Endothelial cell of umbilical vein (primary cell): ENCODE measurements at regions of chr16 and their contacts with region 1.

Region 1: GRCh38 chr16:72501739-72502593 is 330.0 kb upstream of the PMFBP1 start:
- DNase-seq: peak; percentile 88
- H3K4me3 ChIP-seq: no peak overlapping the region
- H3K27ac ChIP-seq: no peak overlapping the region
- H3K4me1 ChIP-seq: no peaks in the 10 kb centered on the region
- H3K27me3 ChIP-seq: no peaks in the 10 kb centered on the region
- CTCF ChIP-seq: peak; percentile 68 to 75
- POLR2A ChIP-seq: no peak

Region 2: DNA sequence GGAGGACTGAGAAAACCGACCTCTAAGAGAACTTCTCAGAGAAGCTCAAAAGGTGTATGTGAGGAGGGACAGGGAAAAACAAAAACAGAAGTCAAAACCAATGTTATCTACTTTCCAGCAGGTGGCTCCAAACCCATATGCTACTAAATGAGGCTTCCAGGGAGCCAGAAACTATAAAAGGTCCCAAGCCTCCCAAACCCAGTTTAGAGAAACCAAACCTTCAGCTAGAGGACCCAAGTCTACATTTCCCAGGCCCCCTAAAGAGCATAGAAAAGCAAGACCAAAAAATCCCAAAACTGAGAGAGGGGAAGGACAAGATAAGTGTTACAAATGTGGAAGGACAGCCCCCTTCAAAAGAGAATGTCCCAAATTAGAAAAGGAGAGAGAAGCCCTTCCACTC is 435.2 kb before region 1 on chr16:
- CTCF ChIA-PET with region 1: no interaction called
- POLR2A ChIA-PET with region 1: no interaction called
- dilution Hi-C with region 1: no loop called
- intact Hi-C with region 1: no loop called
- DNase-seq: peak; percentile 39
- H3K4me3 ChIP-seq: no peak overlapping the region
- H3K27ac ChIP-seq: no peak overlapping the region
- H3K4me1 ChIP-seq: no peaks in the 10 kb centered on the region
- H3K27me3 ChIP-seq: peaks cover 0 to 1% of the 10 kb centered on the region in 2 experiments
- CTCF ChIP-seq: peak; percentile 36 to 52
- POLR2A ChIP-seq: no peak

Region 3: GRCh38 chr16:72482695-72483094 is 19.3 kb before region 1 on chr16:
- CTCF ChIA-PET with region 1: no interaction called
- POLR2A ChIA-PET with region 1: no interaction called
- dilution Hi-C with region 1: no loop called
- intact Hi-C with region 1: no loop called
- DNase-seq: no peak
- H3K4me3 ChIP-seq: no peak overlapping the region
- H3K27ac ChIP-seq: no peak overlapping the region
- H3K4me1 ChIP-seq: peaks cover 27% of the 10 kb centered on the region
- H3K27me3 ChIP-seq: no peaks in the 10 kb centered on the region
- CTCF ChIP-seq: no peak
- POLR2A ChIP-seq: no peak

Region 4: GRCh38 chr16:72523087-72523486 is 21.1 kb after region 1 on chr16:
- CTCF ChIA-PET with region 1: no interaction called
- POLR2A ChIA-PET with region 1: no interaction called
- dilution Hi-C with region 1: no loop called
- intact Hi-C with region 1: no loop called
- DNase-seq: no peak
- H3K4me3 ChIP-seq: no peak overlapping the region
- H3K27ac ChIP-seq: no peak overlapping the region
- H3K4me1 ChIP-seq: no peaks in the 10 kb centered on the region
- H3K27me3 ChIP-seq: no peaks in the 10 kb centered on the region
- CTCF ChIP-seq: no peak
- POLR2A ChIP-seq: no peak

Region 5: GRCh38 chr16:72664509-72665225 is 162.7 kb after region 1 on chr16:
- CTCF ChIA-PET with region 1: interaction called, 4 read pairs
- POLR2A ChIA-PET with region 1: no interaction called
- dilution Hi-C with region 1: no loop called
- intact Hi-C with region 1: loop called (anchors 10 kb)
- DNase-seq: peak; percentile 98
- H3K4me3 ChIP-seq: peak overlapping the region; percentile 89 to 96 (median 95)
- H3K27ac ChIP-seq: peak overlapping the region; percentile 88
- H3K4me1 ChIP-seq: peaks cover 10% of the 10 kb centered on the region
- H3K27me3 ChIP-seq: no peaks in the 10 kb centered on the region
- CTCF ChIP-seq: no peak
- POLR2A ChIP-seq: peak; percentile 59

Region 6: DNA sequence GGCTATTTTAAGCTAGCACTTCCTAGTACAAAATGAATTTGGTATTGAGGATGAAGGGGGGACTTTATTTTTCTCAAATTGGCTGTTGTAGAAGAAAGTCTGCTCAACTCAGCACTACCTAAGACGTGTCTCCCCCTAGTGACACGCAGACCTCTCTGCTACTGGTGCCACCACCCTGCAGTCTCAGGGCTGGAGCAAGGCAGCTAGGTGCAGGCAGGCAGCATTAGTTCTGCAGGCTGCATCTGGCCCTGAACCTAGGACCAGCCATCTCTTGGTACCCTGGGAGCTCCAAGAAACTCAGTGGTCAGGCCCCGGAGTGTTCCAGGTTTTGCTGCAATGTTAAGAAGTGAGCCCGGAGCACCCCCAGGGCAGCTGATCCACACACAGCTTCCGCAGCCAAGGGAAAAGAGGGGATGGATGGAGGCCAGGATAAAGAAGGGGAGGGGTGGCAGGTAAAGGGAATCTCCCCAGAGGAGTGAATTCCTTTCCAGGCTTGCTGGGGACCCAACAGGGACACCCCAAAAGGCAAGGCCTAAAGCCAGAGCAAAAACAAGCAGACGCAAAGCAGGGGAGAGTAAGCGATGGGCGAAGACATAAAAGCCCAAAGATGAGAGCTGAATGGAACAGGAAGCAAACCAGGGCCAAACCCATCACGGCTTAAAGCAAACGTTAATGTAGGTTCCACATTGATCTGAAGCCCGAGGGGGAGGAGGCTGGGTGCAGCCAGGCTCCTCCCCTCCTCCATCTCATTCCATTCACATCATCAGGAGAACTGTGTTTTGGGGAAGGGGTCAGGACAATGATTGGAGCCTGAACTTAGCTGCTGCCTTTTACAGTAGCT is 345.4 kb after region 1 on chr16:
- CTCF ChIA-PET with region 1: no interaction called
- POLR2A ChIA-PET with region 1: no interaction called
- dilution Hi-C with region 1: no loop called
- intact Hi-C with region 1: loop called (anchors 1 kb)
- DNase-seq: peak; percentile 32
- H3K4me3 ChIP-seq: no peak overlapping the region
- H3K27ac ChIP-seq: peak overlapping the region; percentile 90
- H3K4me1 ChIP-seq: peaks cover 22% of the 10 kb centered on the region
- H3K27me3 ChIP-seq: no peaks in the 10 kb centered on the region
- CTCF ChIP-seq: peak; percentile 25 to 50
- POLR2A ChIP-seq: no peak

Region 7: GRCh38 chr16:73172241-73172972 is 670.4 kb after region 1 on chr16:
- CTCF ChIA-PET with region 1: interaction called, 3 read pairs
- POLR2A ChIA-PET with region 1: no interaction called
- dilution Hi-C with region 1: no loop called
- intact Hi-C with region 1: loop called (anchors 5 kb)
- DNase-seq: peak; percentile 98
- H3K4me3 ChIP-seq: no peak overlapping the region
- H3K27ac ChIP-seq: peak overlapping the region; percentile 72
- H3K4me1 ChIP-seq: peaks cover 29% of the 10 kb centered on the region
- H3K27me3 ChIP-seq: no peaks in the 10 kb centered on the region
- CTCF ChIP-seq: peak; percentile 17 to 31
- POLR2A ChIP-seq: peak; percentile 55

Region 8: GRCh38 chr16:73956587-73957494 is 1454.9 kb after region 1 on chr16:
- CTCF ChIA-PET with region 1: interaction called, 22 read pairs
- POLR2A ChIA-PET with region 1: no interaction called
- dilution Hi-C with region 1: no loop called
- intact Hi-C with region 1: loop called (anchors 1 kb)
- DNase-seq: peak; percentile 53
- H3K4me3 ChIP-seq: no peak overlapping the region
- H3K27ac ChIP-seq: no peak overlapping the region
- H3K4me1 ChIP-seq: no peaks in the 10 kb centered on the region
- H3K27me3 ChIP-seq: no peaks in the 10 kb centered on the region
- CTCF ChIP-seq: peak; percentile 69 to 72
- POLR2A ChIP-seq: no peak